ENCODE measurements at regions of chr7 and their contacts with region 1.

Region 1: DNA sequence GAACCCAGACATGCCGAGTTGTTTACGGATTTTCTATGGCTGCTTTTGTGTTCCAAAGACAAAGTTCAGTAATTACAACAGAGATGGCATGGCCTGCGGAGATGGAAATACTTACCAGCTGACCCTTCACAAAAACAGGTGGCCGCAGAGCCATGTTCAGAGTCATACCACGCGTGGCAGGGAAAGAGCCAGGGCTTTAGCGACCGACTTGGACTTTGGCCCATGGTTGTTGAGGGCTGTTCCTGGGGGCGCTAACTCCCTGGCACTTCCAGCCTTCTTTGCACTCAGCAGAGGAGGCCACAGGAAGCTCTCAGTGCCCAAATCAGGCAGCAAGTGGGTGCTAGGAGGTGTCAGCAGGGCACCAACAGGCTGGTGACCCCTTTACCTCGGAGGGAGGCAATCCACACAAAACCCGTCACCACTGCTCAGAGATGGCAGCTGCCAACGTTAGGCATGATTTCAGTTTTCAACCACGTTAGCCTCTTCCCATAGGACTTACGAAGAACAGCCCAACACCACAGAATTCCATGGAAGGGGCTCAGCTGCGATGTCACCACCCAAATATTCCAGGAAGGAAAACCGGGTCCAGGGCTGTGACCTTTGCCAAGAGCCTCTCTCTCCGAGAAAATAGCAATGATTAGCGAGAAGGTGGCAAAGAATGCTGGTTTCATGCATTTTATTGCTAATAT is 21.4 kb upstream of the CNPY1 start:
- DNase-seq: no peak
- H3K4me3 Mint-ChIP-seq: no peak overlapping the region
- H3K27ac Mint-ChIP-seq: no peak overlapping the region
- H3K4me1 Mint-ChIP-seq: no peaks in the 10 kb centered on the region
- H3K27me3 Mint-ChIP-seq: peaks cover 30% of the 10 kb centered on the region
- CTCF ChIP-seq: no peak

Region 2: DNA sequence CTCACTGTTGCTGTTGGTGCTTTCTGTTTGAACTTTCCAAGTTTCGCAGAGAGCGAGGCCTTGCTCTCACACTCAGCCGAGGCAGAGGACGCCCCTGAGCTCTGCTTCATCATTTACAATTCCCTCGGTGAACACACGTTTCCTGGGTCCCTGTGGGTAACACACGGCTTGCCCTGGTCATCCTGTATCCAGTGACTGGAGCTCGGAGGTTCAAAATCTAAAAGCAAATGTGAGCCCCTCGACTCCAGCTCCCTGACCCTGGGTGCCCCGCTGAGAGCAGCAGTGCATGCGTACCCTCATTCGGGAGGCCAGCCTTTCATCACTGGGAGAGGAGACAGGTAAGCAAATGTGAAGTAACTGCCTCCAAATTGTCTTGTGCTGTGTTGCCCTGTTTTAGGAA is 27.2 kb before region 1 on chr7:
- CTCF ChIA-PET with region 1: no interaction called
- intact Hi-C with region 1: loop called (anchors 1 kb)
- DNase-seq: no peak
- H3K4me3 Mint-ChIP-seq: no peak overlapping the region
- H3K27ac Mint-ChIP-seq: no peak overlapping the region
- H3K4me1 Mint-ChIP-seq: no peaks in the 10 kb centered on the region
- H3K27me3 Mint-ChIP-seq: peaks cover 67% of the 10 kb centered on the region
- CTCF ChIP-seq: no peak

Region 3: DNA sequence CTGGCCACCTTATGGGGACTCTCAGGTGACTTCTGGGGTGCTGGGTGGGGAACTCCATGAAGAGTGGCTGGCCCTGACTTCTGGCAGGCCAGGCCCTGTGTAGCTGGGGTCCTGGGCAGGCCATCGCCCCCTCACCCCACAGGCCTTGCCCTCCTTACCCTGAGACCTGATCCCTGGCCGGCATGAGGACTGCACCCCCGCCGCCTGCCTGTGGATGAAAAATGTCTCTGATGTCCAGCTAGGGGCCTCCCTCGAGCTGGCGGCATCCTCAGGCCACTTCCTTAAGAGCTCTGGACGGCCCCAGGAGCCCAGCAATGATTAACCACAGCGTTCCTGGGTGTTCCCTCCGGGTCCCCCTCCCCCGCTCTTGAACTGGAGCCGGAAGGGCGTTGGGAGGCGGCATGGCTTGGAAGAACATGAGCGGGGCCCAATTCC is 276.2 kb after region 1 on chr7:
- CTCF ChIA-PET with region 1: no interaction called
- intact Hi-C with region 1: no loop called
- DNase-seq: peak; percentile 96
- H3K4me3 Mint-ChIP-seq: no peak overlapping the region
- H3K27ac Mint-ChIP-seq: peak overlapping the region; percentile 58
- H3K4me1 Mint-ChIP-seq: peaks cover 12% of the 10 kb centered on the region
- H3K27me3 Mint-ChIP-seq: no peaks in the 10 kb centered on the region
- CTCF ChIP-seq: no peak